OCI-LY7 (cell line): ENCODE measurements at regions of chr3 and their contacts with region 1.

Region 1: GRCh38 chr3:30199096-30199759 is 407.2 kb upstream of the TGFBR2 start:
- DNase-seq: peak; percentile 64
- H3K4me3 ChIP-seq: no peak overlapping the region
- H3K27ac ChIP-seq: no peak overlapping the region
- H3K4me1 ChIP-seq: no peaks in the 10 kb centered on the region
- CTCF ChIP-seq: peak; percentile 98

Region 2: GRCh38 chr3:30012941-30013543 is 186.2 kb before region 1 on chr3:
- CTCF ChIA-PET with region 1: no interaction called
- POLR2A ChIA-PET with region 1: interaction called, 3 read pairs
- intact Hi-C with region 1: loop called (anchors 1 kb)
- DNase-seq: peak; percentile 55
- H3K4me3 ChIP-seq: no peak overlapping the region
- H3K27ac ChIP-seq: no peak overlapping the region
- H3K4me1 ChIP-seq: no peaks in the 10 kb centered on the region
- CTCF ChIP-seq: peak; percentile 92

Region 3: DNA sequence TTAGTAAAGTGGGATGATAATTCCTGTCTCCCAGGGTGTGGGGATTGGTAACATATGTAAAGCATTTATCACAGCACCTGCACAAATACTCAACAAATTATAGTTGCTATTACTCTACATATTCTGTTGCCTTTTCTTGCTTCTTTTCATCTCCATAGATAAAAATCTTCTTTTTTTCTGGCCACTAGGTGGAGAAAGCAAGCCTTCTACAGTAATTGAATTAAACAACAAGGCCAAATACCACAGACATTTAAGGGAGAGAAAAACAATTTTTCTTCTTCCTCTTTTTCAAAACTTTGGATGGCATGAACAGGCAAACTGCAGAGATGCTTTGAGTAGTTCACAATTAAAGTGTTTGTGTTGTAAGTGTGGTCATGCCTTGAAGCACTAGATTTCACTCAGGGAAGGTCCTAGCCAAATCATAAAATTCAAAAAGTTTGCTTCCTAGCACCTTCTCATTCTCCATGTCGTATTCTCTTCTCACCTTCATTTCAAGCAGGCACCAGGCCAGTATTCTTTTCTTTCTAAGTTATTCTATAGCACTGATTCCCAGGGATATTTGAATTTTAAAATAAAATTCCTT is 86.2 kb before region 1 on chr3:
- CTCF ChIA-PET with region 1: no interaction called
- POLR2A ChIA-PET with region 1: interaction called, 3 read pairs
- intact Hi-C with region 1: loop called (anchors 5 kb)
- DNase-seq: peak; percentile 45
- H3K4me3 ChIP-seq: no peak overlapping the region
- H3K27ac ChIP-seq: no peak overlapping the region
- H3K4me1 ChIP-seq: no peaks in the 10 kb centered on the region
- CTCF ChIP-seq: peak; percentile 80

Region 4: DNA sequence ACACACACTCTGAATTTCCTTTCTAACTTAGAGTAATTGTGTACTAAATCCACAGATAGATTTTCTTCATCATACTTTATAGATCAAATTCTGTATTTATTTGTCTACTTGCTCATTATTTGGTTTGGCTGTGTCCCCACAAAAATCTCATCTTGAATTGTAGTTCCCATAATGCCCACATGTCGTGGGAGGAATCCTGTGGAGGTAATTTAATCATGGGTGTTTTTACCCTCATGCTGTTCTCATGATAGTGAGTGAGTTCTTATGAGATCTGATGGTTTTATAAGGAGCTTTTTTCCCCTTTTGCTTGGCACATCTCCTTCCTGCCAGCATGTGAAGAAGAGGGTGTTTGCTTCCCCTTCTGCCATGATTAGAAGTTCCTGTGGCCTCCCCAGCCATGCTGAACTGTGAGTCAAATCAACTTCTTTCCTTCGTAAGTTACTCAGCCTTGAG is 208.9 kb after region 1 on chr3:
- CTCF ChIA-PET with region 1: no interaction called
- POLR2A ChIA-PET with region 1: no interaction called
- intact Hi-C with region 1: no loop called
- DNase-seq: no peak
- H3K4me3 ChIP-seq: no peak overlapping the region
- H3K27ac ChIP-seq: no peak overlapping the region
- H3K4me1 ChIP-seq: no peaks in the 10 kb centered on the region
- CTCF ChIP-seq: no peak